ENCODE measurements at regions of chr7 and their contacts with region 1.

Region 1: GRCh38 chr7:35037526-35038339 is 448 bp upstream of the DPY19L1 start:
- DNase-seq: peak; percentile 85
- H3K4me3 Mint-ChIP-seq: peak overlapping the region; percentile 81
- H3K27ac Mint-ChIP-seq: peak overlapping the region; percentile 37
- H3K4me1 Mint-ChIP-seq: peaks cover 30% of the 10 kb centered on the region
- H3K27me3 Mint-ChIP-seq: peaks cover 13% of the 10 kb centered on the region

Region 2: DNA sequence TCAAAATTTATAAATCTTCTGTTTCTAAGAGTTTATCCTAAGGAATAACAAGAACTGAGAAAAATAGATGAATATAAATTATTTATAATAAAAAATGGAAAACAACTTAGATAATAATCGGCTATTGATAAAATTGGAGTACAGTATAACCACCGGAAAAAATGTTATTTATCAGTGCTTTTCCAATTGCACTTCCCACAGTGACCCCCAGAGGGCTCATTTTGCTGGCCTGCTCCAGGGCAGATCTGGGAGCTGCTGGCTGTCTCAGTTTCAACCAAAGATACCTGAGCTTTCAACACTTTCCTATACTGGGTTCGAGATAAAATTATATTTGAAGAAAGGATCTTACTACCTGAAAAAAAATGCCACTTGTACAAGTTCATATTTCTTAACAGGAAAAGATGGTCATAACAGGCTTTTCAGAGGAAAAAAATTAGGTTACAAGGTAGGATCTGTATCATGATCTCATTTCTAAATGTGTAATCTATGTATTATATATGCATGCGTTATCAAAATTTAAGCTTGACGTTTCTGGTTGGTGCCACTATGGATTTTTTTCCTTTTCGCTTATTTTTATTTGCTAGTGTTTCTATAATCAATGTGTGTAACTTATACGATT is 214.0 kb before region 1 on chr7:
- intact Hi-C with region 1: loop called (anchors 1 kb)
- DNase-seq: peak; percentile 11
- H3K4me3 Mint-ChIP-seq: no peak overlapping the region
- H3K27ac Mint-ChIP-seq: no peak overlapping the region
- H3K4me1 Mint-ChIP-seq: no peaks in the 10 kb centered on the region
- H3K27me3 Mint-ChIP-seq: peaks cover 2% of the 10 kb centered on the region

Region 3: DNA sequence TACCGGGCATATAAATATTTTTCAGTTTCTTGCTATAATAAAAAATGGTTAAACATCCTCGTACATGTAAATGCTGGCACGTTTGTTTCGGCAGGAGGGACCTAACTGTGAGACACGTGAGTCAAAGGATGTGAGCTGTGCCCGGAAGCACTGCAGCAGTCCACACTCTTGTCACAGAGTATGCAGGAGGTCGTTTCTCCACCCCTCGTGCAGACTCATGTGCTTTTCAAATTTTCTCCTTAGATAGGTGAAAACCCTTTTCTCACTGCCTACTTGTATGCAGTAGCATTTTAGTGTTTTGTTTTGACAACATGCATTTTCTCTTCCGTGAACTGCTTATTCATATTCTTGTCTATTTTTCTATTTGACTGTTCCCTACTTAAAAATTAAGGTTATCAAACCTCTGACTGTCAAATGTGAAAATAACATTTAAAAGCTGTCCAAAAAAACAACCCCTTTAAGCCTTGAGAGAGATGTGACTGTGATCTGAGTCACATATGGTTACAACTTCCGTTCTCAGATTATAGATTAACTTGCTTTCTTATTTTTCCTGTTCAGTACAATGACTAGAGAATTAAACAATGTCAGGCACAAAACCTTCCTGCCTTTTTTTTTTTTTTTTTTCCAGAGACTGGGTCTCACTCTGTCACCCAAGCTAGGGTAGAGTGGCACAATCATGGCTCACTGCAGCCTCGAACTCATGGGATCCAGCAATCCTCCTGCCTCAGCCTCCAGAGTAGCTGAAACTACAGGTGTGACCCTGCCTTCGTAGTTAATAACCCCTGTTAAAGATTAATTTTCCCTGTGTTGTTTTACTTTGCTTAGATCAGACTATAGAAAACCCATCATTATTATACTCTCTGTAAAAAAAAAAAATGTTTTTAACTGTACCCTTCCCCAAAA is 45.5 kb before region 1 on chr7:
- intact Hi-C with region 1: loop called (anchors 1 kb)
- DNase-seq: no peak
- H3K4me3 Mint-ChIP-seq: no peak overlapping the region
- H3K27ac Mint-ChIP-seq: peak overlapping the region; percentile 77
- H3K4me1 Mint-ChIP-seq: peaks cover 17% of the 10 kb centered on the region
- H3K27me3 Mint-ChIP-seq: no peaks in the 10 kb centered on the region

Measured in activated T-helper 1 cell treated with anti-CD3 and anti-CD28 coated beads, Interleukin-12 subunit alpha, Interleukin-12 subunit beta, Interleukin-2, Interleukin-4 antibody, amounts not matched to agents 30 ng/mL and 10 ng/mL and 1 ng/mL, durations not matched to agents 14 hours and 24 hours and 36 hours (primary cell).